ENCODE measurements at regions of chr14 and their contacts with region 1.

Region 1: GRCh38 chr14:73741386-73741875 is 27.2 kb upstream of the PNMA1 start:
- DNase-seq: no peak
- H3K4me3 ChIP-seq: peak overlapping the region; percentile 35
- H3K27ac ChIP-seq: peak overlapping the region; percentile 80
- H3K27me3 ChIP-seq: no peaks in the 10 kb centered on the region
- CTCF ChIP-seq: no peak

Region 2: GRCh38 chr14:73662487-73662943 is 78.9 kb before region 1 on chr14:
- CTCF ChIA-PET with region 1: no interaction called
- POLR2A ChIA-PET with region 1: no interaction called
- DNase-seq: peak; percentile 61
- H3K4me3 ChIP-seq: no peak overlapping the region
- H3K27ac ChIP-seq: no peak overlapping the region
- H3K27me3 ChIP-seq: no peaks in the 10 kb centered on the region
- CTCF ChIP-seq: peak; percentile 71

Region 3: DNA sequence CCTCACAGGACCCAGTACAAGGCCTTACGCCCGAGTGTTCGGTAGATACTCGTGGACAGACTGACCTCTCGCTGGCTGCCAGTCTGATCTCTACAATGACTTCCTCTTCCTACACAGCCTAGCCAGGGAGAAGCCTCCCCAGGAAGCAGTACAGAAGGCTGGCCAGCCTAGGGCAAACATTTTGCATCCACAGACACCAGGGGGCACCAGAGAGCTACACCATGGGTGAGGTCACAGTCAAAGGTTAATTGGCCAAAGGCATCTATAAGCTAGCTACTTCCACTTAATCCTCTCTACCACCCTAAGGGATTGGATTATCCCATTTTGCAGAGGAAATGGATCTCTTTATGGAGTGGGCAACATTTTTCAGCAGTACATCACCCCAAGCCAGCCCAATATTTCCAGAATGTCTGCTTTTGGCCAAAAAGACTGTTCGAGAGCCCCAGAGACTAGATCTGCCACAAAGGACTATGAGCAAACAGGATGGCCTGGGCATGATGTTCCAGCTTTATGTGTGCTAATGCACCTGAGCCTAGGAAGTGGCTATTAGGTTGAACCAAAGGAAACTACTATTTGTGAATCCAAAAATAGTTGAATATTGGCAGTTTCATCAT is 12.6 kb before region 1 on chr14:
- CTCF ChIA-PET with region 1: interaction called, 10 read pairs
- POLR2A ChIA-PET with region 1: interaction called, 6 read pairs
- DNase-seq: no peak
- H3K4me3 ChIP-seq: no peak overlapping the region
- H3K27ac ChIP-seq: peak overlapping the region; percentile 11
- H3K27me3 ChIP-seq: no peaks in the 10 kb centered on the region
- CTCF ChIP-seq: peak; percentile 96

Region 4: DNA sequence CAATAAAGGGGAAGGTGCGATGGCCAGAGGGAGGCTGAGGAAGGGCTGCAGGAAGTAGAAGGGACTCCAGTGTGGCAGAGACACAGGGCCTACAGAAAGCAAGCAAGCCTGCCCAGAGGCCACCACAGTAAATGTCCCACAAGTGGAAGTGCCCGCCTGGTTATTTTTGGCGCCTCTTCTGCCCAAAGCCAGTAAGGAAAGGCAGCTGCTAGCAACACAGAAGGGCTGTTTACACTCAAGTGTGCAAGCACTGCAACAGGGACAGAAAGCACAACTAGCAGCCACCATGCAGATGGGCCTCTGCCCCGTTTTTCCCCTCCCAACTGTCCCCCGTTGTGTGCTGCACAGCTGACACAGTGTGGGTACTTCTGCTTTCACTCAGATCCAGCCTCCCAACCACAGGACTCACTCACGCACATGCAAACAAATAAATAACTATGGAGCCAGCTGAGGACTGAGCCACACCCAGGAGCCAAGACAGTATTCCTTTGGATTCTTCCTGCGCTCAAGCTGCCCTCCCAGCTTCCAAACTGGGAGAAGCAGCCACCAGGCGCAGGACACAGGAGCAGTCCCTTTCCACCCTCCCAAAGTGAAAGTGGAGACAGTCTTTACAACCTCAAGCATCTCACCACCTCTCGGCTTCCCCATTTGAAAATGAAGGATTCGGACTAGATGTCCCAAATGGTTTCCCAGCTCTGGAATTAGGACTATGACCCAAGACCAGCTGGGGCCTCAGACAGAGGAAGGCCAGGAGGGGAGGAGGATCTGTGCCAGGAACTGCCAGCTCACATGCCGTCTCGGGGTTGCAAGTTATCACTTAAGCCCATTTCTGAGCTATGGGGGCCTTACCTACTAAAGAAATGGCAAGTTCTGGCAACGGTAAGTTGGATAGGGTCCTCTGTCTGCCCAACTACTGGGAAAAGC is 12.8 kb after region 1 on chr14:
- CTCF ChIA-PET with region 1: interaction called, 4 read pairs
- POLR2A ChIA-PET with region 1: interaction called, 21 read pairs
- DNase-seq: no peak
- H3K4me3 ChIP-seq: peak overlapping the region; percentile 41
- H3K27ac ChIP-seq: peak overlapping the region; percentile 68
- H3K27me3 ChIP-seq: no peaks in the 10 kb centered on the region
- CTCF ChIP-seq: no peak

Region 5: GRCh38 chr14:73759714-73760597 is 18.5 kb after region 1 on chr14:
- CTCF ChIA-PET with region 1: interaction called, 4 read pairs
- POLR2A ChIA-PET with region 1: interaction called, 21 read pairs
- DNase-seq: peak; percentile 97
- H3K4me3 ChIP-seq: peak overlapping the region; percentile 91
- H3K27ac ChIP-seq: peak overlapping the region; percentile 98
- H3K27me3 ChIP-seq: no peaks in the 10 kb centered on the region
- CTCF ChIP-seq: no peak

Measured in AG04450 (cell line).